WTC11 (cell line): ENCODE measurements at regions of chr7 and their contacts with region 1.

Region 1: GRCh38 chr7:22110227-22110839 is 164.6 kb upstream of the CDCA7L start:
- DNase-seq: peak; percentile 65
- ATAC-seq: peak; percentile 76
- H3K4me3 Mint-ChIP-seq: no peak overlapping the region
- H3K27ac Mint-ChIP-seq: no peak overlapping the region
- H3K4me1 Mint-ChIP-seq: peaks cover 3% of the 10 kb centered on the region; the same call in 1 of the 2 replicates
- H3K27me3 Mint-ChIP-seq: no peaks in the 10 kb centered on the region
- CTCF ChIP-seq: peak; percentile 76

Region 2: DNA sequence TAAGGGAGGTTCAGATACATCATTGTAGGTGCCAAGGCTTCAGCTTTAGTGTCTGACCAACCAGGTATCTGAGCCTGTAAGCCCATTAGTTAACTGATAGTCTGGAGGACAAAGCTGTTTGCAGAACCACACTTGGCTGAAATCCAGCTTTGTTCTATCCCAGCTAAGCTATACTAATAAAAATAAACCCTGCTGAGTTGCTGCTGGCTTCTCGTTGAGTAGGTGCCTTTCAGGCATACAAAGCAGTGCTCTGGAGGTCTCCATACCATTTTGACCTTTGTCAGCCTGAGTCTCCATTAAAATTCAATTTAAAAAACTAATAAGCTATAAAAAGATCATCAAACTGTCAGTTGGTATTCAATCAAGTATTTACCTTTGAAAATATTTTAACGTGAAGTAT is 186.7 kb before region 1 on chr7:
- CTCF ChIA-PET with region 1: no interaction called
- POLR2A ChIA-PET with region 1: no interaction called
- DNase-seq: no peak
- ATAC-seq: peak; percentile 68
- H3K4me3 Mint-ChIP-seq: no peak overlapping the region
- H3K27ac Mint-ChIP-seq: no peak overlapping the region
- H3K4me1 Mint-ChIP-seq: peaks cover 73% of the 10 kb centered on the region
- H3K27me3 Mint-ChIP-seq: no peaks in the 10 kb centered on the region
- CTCF ChIP-seq: no peak

Region 3: DNA sequence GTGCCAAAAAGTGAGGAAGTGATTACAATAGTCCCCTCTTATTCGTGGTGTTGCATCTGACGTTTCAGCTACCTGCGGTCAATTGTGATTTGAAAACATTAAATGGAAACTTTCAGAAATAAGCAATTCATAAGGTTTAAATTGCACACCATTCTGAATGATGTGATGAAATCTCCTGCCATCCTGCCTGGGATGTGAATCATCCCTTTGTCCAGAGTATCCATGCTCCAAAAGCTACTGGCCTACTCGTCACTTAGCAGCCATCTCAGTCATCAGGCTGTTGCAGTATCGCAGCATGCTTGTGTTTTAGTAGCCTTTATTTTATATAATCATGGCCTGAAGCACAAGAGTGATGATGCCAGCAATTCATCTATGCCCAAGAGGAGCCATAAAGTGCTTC is 67.0 kb before region 1 on chr7:
- CTCF ChIA-PET with region 1: no interaction called
- POLR2A ChIA-PET with region 1: no interaction called
- DNase-seq: no peak
- ATAC-seq: no peak
- H3K4me3 Mint-ChIP-seq: no peak overlapping the region
- H3K27ac Mint-ChIP-seq: no peak overlapping the region
- H3K4me1 Mint-ChIP-seq: no peaks in the 10 kb centered on the region
- H3K27me3 Mint-ChIP-seq: no peaks in the 10 kb centered on the region
- CTCF ChIP-seq: no peak

Region 4: DNA sequence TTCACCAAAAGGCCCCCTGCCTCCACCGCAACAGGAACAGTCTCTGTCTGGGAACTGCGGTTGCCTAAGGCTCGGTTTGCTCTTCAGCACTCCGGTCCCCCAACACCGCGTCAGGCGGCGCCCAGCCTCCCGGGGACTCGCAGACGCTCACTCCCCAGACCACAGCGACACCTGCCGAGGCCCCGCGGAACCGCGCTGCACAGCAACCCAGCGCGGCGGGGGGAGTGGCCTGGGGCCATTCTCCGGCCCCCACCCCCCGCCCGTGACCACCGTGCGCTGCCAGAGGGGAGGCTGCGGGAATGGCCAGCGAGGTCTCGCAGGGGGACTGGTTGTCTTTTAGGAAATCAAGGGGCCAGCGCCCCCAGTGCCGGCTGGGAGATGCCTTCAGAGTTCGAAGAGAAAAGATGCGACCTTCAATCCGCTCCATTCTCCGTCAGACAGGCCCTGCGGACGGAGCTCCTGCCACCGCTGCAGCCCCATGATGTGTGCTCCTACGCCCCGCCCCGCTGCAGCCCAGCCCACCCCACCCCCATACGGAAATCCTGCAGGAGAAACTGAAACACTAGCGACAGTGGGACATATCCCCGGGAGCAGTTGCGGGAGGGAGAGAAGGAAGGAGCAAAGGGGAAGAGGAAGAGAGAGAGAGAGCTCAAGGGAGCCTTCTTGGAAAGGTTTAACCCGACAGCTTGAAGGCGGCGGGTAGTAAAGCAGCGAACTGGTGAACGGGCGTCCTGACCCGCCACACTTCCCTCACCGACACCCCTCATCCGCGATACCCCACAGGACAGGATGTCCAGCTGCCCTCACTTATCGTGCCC is 27.2 kb before region 1 on chr7:
- CTCF ChIA-PET with region 1: interaction called, 31 read pairs
- POLR2A ChIA-PET with region 1: no interaction called
- DNase-seq: peak; percentile 96
- ATAC-seq: peak; percentile 94
- H3K4me3 Mint-ChIP-seq: peak overlapping the region; percentile 77
- H3K27ac Mint-ChIP-seq: peak overlapping the region; percentile 76
- H3K4me1 Mint-ChIP-seq: peaks cover 24% of the 10 kb centered on the region
- H3K27me3 Mint-ChIP-seq: peaks cover 19% of the 10 kb centered on the region
- CTCF ChIP-seq: peak; percentile 87; the same call in 1 of the 2 replicates

Region 5: DNA sequence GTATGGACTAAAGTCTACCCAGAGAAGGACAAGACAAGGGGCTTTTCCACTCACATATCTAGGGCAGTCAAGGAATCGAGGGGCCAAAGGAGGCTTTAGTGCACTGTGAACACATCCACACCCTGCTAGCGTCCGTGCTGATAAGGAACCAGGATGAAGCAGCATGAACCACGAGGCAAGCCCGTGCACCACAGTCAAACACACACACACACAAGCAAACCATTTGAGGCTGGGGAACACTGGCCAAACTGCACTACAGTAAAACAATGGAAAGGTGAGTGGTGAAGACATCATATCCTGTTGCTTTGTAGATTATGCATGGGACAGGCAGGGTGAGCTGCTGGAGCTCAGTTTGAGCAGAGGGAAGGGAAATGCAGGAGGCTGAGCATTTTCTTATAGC is 12.8 kb after region 1 on chr7:
- CTCF ChIA-PET with region 1: interaction called, 17 read pairs
- POLR2A ChIA-PET with region 1: no interaction called
- DNase-seq: no peak
- ATAC-seq: peak; percentile 81
- H3K4me3 Mint-ChIP-seq: no peak overlapping the region
- H3K27ac Mint-ChIP-seq: peak overlapping the region; percentile 0; the same call in 1 of the 2 replicates
- H3K4me1 Mint-ChIP-seq: peaks cover 23% of the 10 kb centered on the region
- H3K27me3 Mint-ChIP-seq: no peaks in the 10 kb centered on the region
- CTCF ChIP-seq: no peak

Region 6: GRCh38 chr7:22184549-22185199 is 74.3 kb after region 1 on chr7:
- CTCF ChIA-PET with region 1: interaction called, 13 read pairs
- POLR2A ChIA-PET with region 1: no interaction called
- DNase-seq: peak; percentile 27
- ATAC-seq: peak; percentile 87
- H3K4me3 Mint-ChIP-seq: peak overlapping the region; percentile 9
- H3K27ac Mint-ChIP-seq: peak overlapping the region; percentile 9
- H3K4me1 Mint-ChIP-seq: peaks cover 42% of the 10 kb centered on the region
- H3K27me3 Mint-ChIP-seq: no peaks in the 10 kb centered on the region
- CTCF ChIP-seq: no peak

Region 7: DNA sequence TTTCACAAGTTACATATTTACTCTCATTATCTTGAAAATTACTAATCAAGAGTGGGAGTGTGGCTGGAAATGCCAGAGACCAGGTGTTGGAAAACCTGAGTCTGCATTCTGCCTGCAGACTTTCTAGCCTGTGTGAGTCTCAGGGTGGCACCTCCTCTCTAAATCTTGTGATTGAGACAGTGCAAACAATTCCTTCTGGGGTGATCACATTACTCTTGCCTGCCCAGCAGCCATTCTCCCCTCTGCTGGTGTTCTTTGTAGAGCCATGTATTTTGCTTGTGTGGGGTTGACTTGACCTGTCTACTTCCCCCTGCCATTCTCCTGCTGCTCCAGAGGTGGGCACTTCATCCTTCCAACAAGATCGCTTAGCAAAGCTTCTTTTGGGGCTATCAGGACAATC is 145.5 kb after region 1 on chr7:
- CTCF ChIA-PET with region 1: interaction called, 15 read pairs
- POLR2A ChIA-PET with region 1: no interaction called
- DNase-seq: no peak
- ATAC-seq: peak; percentile 94
- H3K4me3 Mint-ChIP-seq: no peak overlapping the region
- H3K27ac Mint-ChIP-seq: no peak overlapping the region
- H3K4me1 Mint-ChIP-seq: peaks cover 30% of the 10 kb centered on the region
- H3K27me3 Mint-ChIP-seq: no peaks in the 10 kb centered on the region
- CTCF ChIP-seq: no peak

Region 8: DNA sequence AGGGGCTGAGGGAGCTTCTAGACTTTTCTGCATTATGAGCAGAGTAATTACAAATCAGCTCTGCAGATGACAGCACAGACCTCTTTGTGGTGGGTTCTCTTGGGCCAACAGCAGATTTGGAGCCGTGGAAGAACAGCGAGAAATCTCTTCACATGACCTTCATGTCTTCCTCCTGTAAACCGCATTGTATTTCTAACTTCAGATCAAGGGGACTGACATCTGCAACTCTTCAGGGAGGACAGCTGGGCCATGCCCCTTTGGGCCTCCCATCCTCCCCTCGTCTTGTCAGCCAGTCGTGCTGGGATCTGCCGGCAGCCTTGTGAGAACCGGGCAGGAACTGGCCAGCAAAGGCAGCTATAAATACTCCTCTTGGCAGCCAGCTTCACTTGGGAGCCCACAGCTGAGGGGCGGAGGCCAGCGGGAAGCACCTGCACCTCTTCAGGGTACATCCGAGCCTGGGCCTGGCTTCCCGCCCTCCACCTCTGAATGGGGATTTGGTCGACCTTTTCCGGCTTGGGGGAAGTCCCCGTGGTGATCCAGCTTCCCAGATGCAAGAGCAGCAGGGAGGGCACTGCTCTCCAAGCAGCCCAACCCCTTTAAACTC is 334.9 kb after region 1 on chr7:
- CTCF ChIA-PET with region 1: interaction called, 12 read pairs
- POLR2A ChIA-PET with region 1: no interaction called
- DNase-seq: peak; percentile 52
- ATAC-seq: peak; percentile 81
- H3K4me3 Mint-ChIP-seq: no peak overlapping the region
- H3K27ac Mint-ChIP-seq: peak overlapping the region; percentile 79
- H3K4me1 Mint-ChIP-seq: peaks cover 37% of the 10 kb centered on the region
- H3K27me3 Mint-ChIP-seq: no peaks in the 10 kb centered on the region
- CTCF ChIP-seq: no peak

Region 9: GRCh38 chr7:22485189-22485588 is 374.9 kb after region 1 on chr7:
- CTCF ChIA-PET with region 1: interaction called, 12 read pairs
- POLR2A ChIA-PET with region 1: no interaction called
- DNase-seq: no peak
- ATAC-seq: no peak
- H3K4me3 Mint-ChIP-seq: no peak overlapping the region
- H3K27ac Mint-ChIP-seq: no peak overlapping the region
- H3K4me1 Mint-ChIP-seq: peaks cover 14% of the 10 kb centered on the region
- H3K27me3 Mint-ChIP-seq: no peaks in the 10 kb centered on the region
- CTCF ChIP-seq: no peak